PC-3 (cell line): ENCODE measurements at regions of chr9 and their contacts with region 1.

Region 1: DNA sequence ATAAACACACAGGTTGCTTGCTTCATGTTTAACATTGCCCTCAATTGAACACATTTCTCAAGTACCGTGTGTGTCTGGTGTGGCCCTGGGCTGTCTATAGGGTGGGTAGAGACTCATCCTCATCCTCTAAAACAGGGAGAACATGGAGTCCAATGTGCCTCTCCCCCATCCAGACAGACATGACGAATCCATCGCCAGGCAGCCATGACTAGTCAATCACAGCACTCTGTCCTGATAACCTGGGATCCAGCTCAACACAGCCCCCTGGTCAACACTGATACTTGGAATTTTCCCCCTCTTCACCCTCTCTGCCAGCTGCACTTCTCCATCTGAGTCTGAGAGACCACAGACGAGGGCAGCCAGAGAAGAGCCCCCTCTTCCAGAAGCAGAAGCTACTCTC is 10.7 kb upstream of the NTNG2 start:
- DNase-seq: no peak
- ATAC-seq: no peak
- H3K4me3 ChIP-seq: no peak overlapping the region
- H3K27ac ChIP-seq: no peak overlapping the region
- H3K4me1 ChIP-seq: no peaks in the 10 kb centered on the region
- H3K27me3 ChIP-seq: no peaks in the 10 kb centered on the region
- CTCF ChIP-seq: no peak

Region 2: GRCh38 chr9:132079391-132080091 is 71.6 kb before region 1 on chr9 and contains the start of gene MED27:
- CTCF ChIA-PET with region 1: no interaction called
- POLR2A ChIA-PET with region 1: no interaction called
- intact Hi-C with region 1: no loop called
- DNase-seq: peak; percentile 90
- ATAC-seq: peak; percentile 85
- H3K4me3 ChIP-seq: peak within 1 kb of the TSS; percentile 98
- H3K27ac ChIP-seq: peak within 1 kb of the TSS; percentile 39
- H3K4me1 ChIP-seq: peaks cover 26% of the 10 kb centered on the region
- H3K27me3 ChIP-seq: no peaks in the 10 kb centered on the region
- CTCF ChIP-seq: no peak
- total RNA-seq, gene MED27: 22.7 and 38.4 TPM in 2 replicates

Region 3: GRCh38 chr9:132108728-132109127 is 42.4 kb before region 1 on chr9:
- CTCF ChIA-PET with region 1: no interaction called
- POLR2A ChIA-PET with region 1: interaction called, 15 read pairs
- intact Hi-C with region 1: no loop called
- DNase-seq: no peak
- ATAC-seq: no peak
- H3K4me3 ChIP-seq: no peak overlapping the region
- H3K27ac ChIP-seq: no peak overlapping the region
- H3K4me1 ChIP-seq: no peaks in the 10 kb centered on the region
- H3K27me3 ChIP-seq: peaks cover 16% of the 10 kb centered on the region; the same call in 1 of the 2 replicates
- CTCF ChIP-seq: no peak